ENCODE measurements at regions of chr2 and their contacts with region 1.

Region 1: GRCh38 chr2:149561309-149561926 is 26.2 kb downstream of the MMADHC start:
- DNase-seq: peak in 1 of 3 donors; percentile 80
- ATAC-seq: peak; percentile 63
- H3K4me3 ChIP-seq: no peak overlapping the region
- H3K4me1 ChIP-seq: no peaks in the 10 kb centered on the region
- CTCF ChIP-seq: peak; percentile 76

Region 2: DNA sequence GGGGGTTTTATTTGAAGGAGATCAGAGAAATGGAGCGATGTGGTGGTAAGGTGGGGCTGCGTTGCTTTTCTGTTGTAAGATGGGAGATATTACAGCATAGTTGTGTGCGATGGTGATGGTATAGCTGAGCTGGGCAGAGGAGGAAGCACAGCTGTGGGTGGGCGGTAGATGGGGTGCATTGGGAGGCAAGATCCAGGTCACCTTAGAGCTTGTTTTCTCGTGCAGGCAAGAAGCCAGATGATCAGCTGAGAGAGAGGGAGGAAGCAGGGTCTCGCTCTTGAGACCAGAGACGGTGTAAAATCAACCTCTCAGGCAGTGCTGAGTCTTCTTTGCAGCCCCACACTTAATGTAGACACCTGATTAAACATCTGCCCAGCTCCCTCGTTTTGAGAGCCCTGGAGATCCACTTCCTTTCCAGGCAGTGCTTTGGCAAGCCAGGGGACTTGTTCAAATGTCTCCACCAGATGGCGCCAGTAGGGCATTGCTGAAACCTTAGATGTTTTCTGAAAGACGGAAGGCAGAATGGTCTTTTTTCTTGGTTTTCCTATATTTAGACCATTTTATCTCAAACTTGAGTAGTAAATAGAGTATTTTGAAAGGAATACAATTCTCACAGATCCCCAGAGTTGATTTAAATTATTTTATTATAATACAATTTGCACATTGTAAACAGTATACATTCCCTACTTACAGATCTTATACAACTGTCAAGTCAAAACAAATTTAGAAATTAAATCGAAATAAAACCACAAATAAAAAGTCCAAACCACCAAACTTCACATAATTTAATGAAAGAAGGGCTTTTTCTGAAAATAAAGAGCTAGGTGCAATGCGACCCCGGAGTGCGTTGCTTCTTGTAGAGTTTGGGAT is 544.1 kb before region 1 on chr2:
- intact Hi-C with region 1: loop called (anchors 5 to 10 kb)
- DNase-seq: peak in 2 of 3 donors; percentile 77 to 92
- ATAC-seq: peak; percentile 78
- H3K4me3 ChIP-seq: no peak overlapping the region
- H3K4me1 ChIP-seq: peaks cover 6% of the 10 kb centered on the region
- CTCF ChIP-seq: peak; percentile 77

Region 3: DNA sequence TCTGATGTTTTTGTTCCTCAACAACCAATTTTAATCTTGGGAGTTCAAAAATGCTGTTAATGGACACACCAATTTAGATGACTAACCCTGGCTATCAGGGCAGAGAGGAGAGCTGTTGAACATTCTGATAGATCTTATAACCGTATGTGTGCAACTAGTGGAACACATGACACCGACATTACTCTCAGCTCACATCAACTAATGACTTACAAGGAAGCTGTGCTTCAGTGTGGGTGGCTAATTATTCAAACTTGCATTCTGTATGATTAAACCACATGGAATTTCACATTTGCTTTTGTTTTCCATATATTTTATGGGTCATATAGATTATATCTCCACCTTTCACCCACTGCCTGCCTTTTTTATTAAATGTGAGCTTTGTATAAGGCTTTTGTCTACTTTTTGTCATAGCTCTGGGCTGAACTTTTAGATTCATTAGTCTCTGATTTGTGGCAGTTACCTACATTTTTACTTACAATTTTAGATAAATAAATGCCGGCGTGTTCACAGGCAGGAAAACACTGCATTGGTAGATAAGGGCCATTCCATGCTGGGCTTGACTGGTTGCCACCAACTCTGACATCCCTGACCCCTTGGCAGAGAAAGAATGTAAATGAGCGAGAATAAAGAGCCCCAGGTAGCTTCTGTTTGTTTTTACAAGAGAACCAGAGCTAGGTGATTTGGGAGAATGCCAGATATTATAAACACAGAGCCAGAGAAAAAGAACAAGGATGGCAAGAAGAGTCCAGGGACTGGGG is 195.4 kb before region 1 on chr2:
- intact Hi-C with region 1: no loop called
- DNase-seq: peak in 2 of 3 donors; percentile 3 to 22
- ATAC-seq: peak; percentile 65
- H3K4me3 ChIP-seq: no peak overlapping the region
- H3K4me1 ChIP-seq: no peaks in the 10 kb centered on the region
- CTCF ChIP-seq: no peak